Caco-2 (cell line): ENCODE measurements at regions of chr11 and their contacts with region 1.

Region 1: DNA sequence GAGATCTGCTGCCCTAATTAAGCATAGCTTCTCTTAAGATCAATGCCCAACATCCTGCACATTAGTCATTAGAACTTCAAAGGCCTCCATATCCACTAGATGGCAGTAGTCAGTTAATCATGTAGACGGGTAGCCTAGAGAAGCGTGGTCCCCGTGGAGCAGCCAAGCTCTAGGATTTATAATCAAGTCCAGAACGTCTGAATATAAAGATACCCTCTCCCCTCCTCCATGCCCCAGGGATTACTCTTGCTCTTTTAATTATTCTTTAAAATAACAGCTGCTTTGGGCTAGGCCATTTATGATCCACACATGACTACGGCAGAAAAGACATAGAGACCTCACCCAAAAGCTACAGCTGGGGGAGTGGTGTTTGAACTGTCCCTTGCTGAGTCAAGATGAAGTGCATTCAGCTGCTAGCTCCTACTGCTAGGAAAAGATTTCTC is 327.6 kb upstream of the PLET1 start:
- DNase-seq: peak; percentile 69 to 81
- H3K4me3 ChIP-seq: no peak overlapping the region
- H3K4me3 Mint-ChIP-seq: no peak overlapping the region
- H3K27ac Mint-ChIP-seq: no peak overlapping the region
- H3K4me1 ChIP-seq: no peaks in the 10 kb centered on the region
- H3K4me1 Mint-ChIP-seq: no peaks in the 10 kb centered on the region
- H3K27me3 ChIP-seq: no peaks in the 10 kb centered on the region; the same call in none of the 2 replicates
- H3K27me3 Mint-ChIP-seq: peaks cover 14% of the 10 kb centered on the region
- CTCF ChIP-seq: peak; percentile 74 to 90

Region 2: GRCh38 chr11:112219476-112220232 is 368.6 kb before region 1 on chr11:
- CTCF ChIA-PET with region 1: no interaction called
- POLR2A ChIA-PET with region 1: no interaction called
- intact Hi-C with region 1: loop called (anchors 1 kb)
- DNase-seq: peak; percentile 60 to 78
- H3K4me3 ChIP-seq: no peak overlapping the region
- H3K4me3 Mint-ChIP-seq: no peak overlapping the region
- H3K27ac Mint-ChIP-seq: no peak overlapping the region
- H3K4me1 ChIP-seq: peaks cover 26% of the 10 kb centered on the region
- H3K4me1 Mint-ChIP-seq: peaks cover 15% of the 10 kb centered on the region
- H3K27me3 ChIP-seq: no peaks in the 10 kb centered on the region
- H3K27me3 Mint-ChIP-seq: no peaks in the 10 kb centered on the region
- CTCF ChIP-seq: peak; percentile 71 to 98

Region 3: GRCh38 chr11:112355726-112356125 is 232.5 kb before region 1 on chr11:
- CTCF ChIA-PET with region 1: no interaction called
- POLR2A ChIA-PET with region 1: no interaction called
- intact Hi-C with region 1: loop called (anchors 1 kb)
- DNase-seq: peak; percentile 53 to 56
- H3K4me3 ChIP-seq: no peak overlapping the region
- H3K4me3 Mint-ChIP-seq: no peak overlapping the region
- H3K27ac Mint-ChIP-seq: no peak overlapping the region
- H3K4me1 ChIP-seq: no peaks in the 10 kb centered on the region
- H3K4me1 Mint-ChIP-seq: no peaks in the 10 kb centered on the region
- H3K27me3 ChIP-seq: no peaks in the 10 kb centered on the region
- H3K27me3 Mint-ChIP-seq: peaks cover 7% of the 10 kb centered on the region
- CTCF ChIP-seq: peak; percentile 38 to 43

Region 4: GRCh38 chr11:112453601-112454577 is 134.4 kb before region 1 on chr11:
- CTCF ChIA-PET with region 1: no interaction called
- POLR2A ChIA-PET with region 1: no interaction called
- intact Hi-C with region 1: no loop called
- DNase-seq: peak; percentile 49 to 67
- H3K4me3 ChIP-seq: no peak overlapping the region
- H3K4me3 Mint-ChIP-seq: no peak overlapping the region
- H3K27ac Mint-ChIP-seq: no peak overlapping the region
- H3K4me1 ChIP-seq: no peaks in the 10 kb centered on the region
- H3K4me1 Mint-ChIP-seq: peaks cover 5% of the 10 kb centered on the region
- H3K27me3 ChIP-seq: no peaks in the 10 kb centered on the region
- H3K27me3 Mint-ChIP-seq: peaks cover 22% of the 10 kb centered on the region
- CTCF ChIP-seq: peak; percentile 52 to 67

Region 5: GRCh38 chr11:112555491-112556364 is 32.5 kb before region 1 on chr11:
- CTCF ChIA-PET with region 1: interaction called, 12 read pairs
- POLR2A ChIA-PET with region 1: no interaction called
- intact Hi-C with region 1: no loop called
- DNase-seq: peak; percentile 68 to 84
- H3K4me3 ChIP-seq: no peak overlapping the region
- H3K4me3 Mint-ChIP-seq: no peak overlapping the region
- H3K27ac Mint-ChIP-seq: no peak overlapping the region
- H3K4me1 ChIP-seq: no peaks in the 10 kb centered on the region
- H3K4me1 Mint-ChIP-seq: no peaks in the 10 kb centered on the region
- H3K27me3 ChIP-seq: no peaks in the 10 kb centered on the region
- H3K27me3 Mint-ChIP-seq: peaks cover 21% of the 10 kb centered on the region
- CTCF ChIP-seq: peak; percentile 86 to 97

Region 6: GRCh38 chr11:112627588-112628045 is 39.3 kb after region 1 on chr11:
- CTCF ChIA-PET with region 1: no interaction called
- POLR2A ChIA-PET with region 1: no interaction called
- intact Hi-C with region 1: no loop called
- DNase-seq: no peak
- H3K4me3 ChIP-seq: no peak overlapping the region
- H3K4me3 Mint-ChIP-seq: no peak overlapping the region
- H3K27ac Mint-ChIP-seq: no peak overlapping the region
- H3K4me1 ChIP-seq: no peaks in the 10 kb centered on the region
- H3K4me1 Mint-ChIP-seq: no peaks in the 10 kb centered on the region
- H3K27me3 ChIP-seq: no peaks in the 10 kb centered on the region
- H3K27me3 Mint-ChIP-seq: peaks cover 21% of the 10 kb centered on the region
- CTCF ChIP-seq: no peak

Region 7: GRCh38 chr11:112795142-112795815 is 207.0 kb after region 1 on chr11:
- CTCF ChIA-PET with region 1: interaction called, 28 read pairs
- POLR2A ChIA-PET with region 1: interaction called, 3 read pairs
- intact Hi-C with region 1: loop called (anchors 1 kb)
- DNase-seq: peak; percentile 66 to 76
- H3K4me3 ChIP-seq: no peak overlapping the region
- H3K4me3 Mint-ChIP-seq: no peak overlapping the region
- H3K27ac Mint-ChIP-seq: no peak overlapping the region
- H3K4me1 ChIP-seq: no peaks in the 10 kb centered on the region
- H3K4me1 Mint-ChIP-seq: no peaks in the 10 kb centered on the region
- H3K27me3 ChIP-seq: peaks cover 2% of the 10 kb centered on the region
- H3K27me3 Mint-ChIP-seq: peaks cover 19% of the 10 kb centered on the region
- CTCF ChIP-seq: peak; percentile 89

Region 8: GRCh38 chr11:112911124-112911523 is 322.9 kb after region 1 on chr11:
- CTCF ChIA-PET with region 1: no interaction called
- POLR2A ChIA-PET with region 1: no interaction called
- intact Hi-C with region 1: no loop called
- DNase-seq: no peak
- H3K4me3 ChIP-seq: no peak overlapping the region
- H3K4me3 Mint-ChIP-seq: no peak overlapping the region
- H3K27ac Mint-ChIP-seq: no peak overlapping the region
- H3K4me1 ChIP-seq: no peaks in the 10 kb centered on the region
- H3K4me1 Mint-ChIP-seq: no peaks in the 10 kb centered on the region
- H3K27me3 ChIP-seq: no peaks in the 10 kb centered on the region; the same call in 1 of the 2 replicates
- H3K27me3 Mint-ChIP-seq: peaks cover 28% of the 10 kb centered on the region
- CTCF ChIP-seq: no peak

Region 9: GRCh38 chr11:113113801-113114706 is 525.8 kb after region 1 on chr11:
- CTCF ChIA-PET with region 1: interaction called, 23 read pairs
- POLR2A ChIA-PET with region 1: no interaction called
- intact Hi-C with region 1: loop called (anchors 1 kb)
- DNase-seq: peak; percentile 71
- H3K4me3 ChIP-seq: no peak overlapping the region
- H3K4me3 Mint-ChIP-seq: no peak overlapping the region
- H3K27ac Mint-ChIP-seq: no peak overlapping the region
- H3K4me1 ChIP-seq: no peaks in the 10 kb centered on the region
- H3K4me1 Mint-ChIP-seq: no peaks in the 10 kb centered on the region
- H3K27me3 ChIP-seq: 0 out of 2 replicates have a peak, but pooled peaks cover 1% of the 10 kb centered on the region
- H3K27me3 Mint-ChIP-seq: peaks cover 27% of the 10 kb centered on the region
- CTCF ChIP-seq: peak; percentile 86 to 98